ENCODE measurements at regions of chr20 and their contacts with region 1.

Region 1: DNA sequence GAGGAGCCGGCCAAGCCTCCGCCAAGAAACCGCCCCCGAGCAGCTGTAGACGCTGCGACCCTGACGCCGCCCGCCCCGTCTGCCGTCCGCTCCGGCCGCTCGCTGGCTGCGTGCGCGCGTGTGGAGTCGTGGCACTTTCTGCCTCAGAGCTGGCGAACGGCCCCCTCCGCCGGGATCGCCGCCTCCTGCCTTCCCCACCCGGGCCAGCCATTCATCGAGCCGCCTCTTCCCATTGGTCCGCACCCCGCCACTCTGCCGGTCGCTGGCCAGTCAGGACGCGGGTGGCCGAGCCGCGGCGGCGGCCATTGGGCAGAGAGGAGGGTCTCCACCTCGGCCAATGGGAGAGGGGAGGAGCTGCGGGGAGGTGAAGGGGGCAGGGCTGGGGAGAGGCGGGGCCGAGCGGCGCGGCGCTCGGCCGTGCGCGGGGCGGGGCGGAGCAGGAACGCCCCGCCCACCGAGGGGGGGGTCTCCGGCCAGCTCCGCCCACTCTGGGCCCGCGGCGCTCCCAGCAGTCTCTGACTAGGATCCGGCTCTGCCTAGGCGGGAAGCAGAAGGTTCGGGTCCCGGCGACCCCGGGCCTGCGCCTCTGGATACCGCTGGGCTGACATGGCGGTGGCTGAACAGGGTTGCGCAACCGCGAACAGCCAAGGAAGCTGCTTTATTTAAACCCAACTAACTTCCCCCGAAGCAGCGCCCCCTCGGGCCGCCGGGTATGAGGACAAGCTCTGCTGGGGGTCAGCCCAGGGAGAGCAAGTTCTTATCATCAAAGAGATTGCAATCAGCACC is at the start of gene RRBP1:
- DNase-seq: peak; percentile 99
- H3K4me3 ChIP-seq: peak within 1 kb of the TSS; percentile 80 to 88 (median 86)
- H3K27ac ChIP-seq: peak within 1 kb of the TSS; percentile 93 to 98 (median 96)
- H3K4me1 ChIP-seq: peaks cover 0 to 31% (median 20%) of the 10 kb centered on the region in 4 donors
- H3K27me3 ChIP-seq: no peaks in the 10 kb centered on the region
- CTCF ChIP-seq: peak; percentile 25 to 76 (median 61)
- EP300 ChIP-seq: no peak
- POLR2A ChIP-seq: peak; percentile 82 to 88
- total RNA-seq, gene RRBP1: 30.1 to 69.2 (median 38.8) TPM

Region 2: DNA sequence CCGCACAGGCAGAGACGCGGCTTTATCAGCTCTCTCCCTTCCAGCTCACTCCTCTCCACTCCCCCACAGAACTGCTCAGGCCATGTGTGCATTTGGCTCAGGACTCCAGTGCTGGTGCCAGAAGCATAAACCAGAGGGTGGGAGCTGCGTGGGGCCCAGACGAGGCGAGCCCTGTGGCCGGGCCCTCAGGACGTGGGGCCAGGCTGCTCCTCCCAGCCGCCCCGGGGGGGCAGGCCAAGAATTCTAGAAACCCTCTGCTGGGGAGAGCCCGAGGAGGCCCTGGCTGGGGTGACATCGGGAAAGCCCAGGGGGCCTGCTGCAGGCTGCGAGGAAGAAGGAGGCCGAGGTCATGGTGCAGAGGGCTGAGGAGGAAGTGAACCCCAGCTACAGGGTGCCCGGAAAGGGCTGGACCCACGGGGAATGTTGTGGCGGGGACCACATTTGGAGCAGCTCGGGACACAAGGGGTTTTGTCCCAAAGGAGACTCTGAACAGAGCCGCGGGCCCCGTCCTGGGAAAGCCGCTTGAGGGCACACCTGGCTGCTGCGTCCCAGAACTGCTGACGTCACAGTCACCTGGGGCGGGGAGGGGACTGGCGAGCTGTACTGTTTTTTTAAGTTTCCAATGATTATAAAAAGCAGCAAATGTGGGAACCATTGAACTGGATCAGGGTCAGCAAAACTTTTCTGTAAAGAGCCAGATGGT is 124.6 kb after region 1 on chr20:
- intact Hi-C with region 1: loop called (anchors 5 kb)
- DNase-seq: peak; percentile 91
- H3K4me3 ChIP-seq: peak overlapping the region in 1 of 4 donors; percentile 1
- H3K27ac ChIP-seq: peak overlapping the region; percentile 71 to 76 (median 74)
- H3K4me1 ChIP-seq: peaks cover 0 to 49% (median 38%) of the 10 kb centered on the region in 4 donors
- H3K27me3 ChIP-seq: no peaks in the 10 kb centered on the region
- CTCF ChIP-seq: no peak
- EP300 ChIP-seq: no peak
- POLR2A ChIP-seq: no peak

Region 3: DNA sequence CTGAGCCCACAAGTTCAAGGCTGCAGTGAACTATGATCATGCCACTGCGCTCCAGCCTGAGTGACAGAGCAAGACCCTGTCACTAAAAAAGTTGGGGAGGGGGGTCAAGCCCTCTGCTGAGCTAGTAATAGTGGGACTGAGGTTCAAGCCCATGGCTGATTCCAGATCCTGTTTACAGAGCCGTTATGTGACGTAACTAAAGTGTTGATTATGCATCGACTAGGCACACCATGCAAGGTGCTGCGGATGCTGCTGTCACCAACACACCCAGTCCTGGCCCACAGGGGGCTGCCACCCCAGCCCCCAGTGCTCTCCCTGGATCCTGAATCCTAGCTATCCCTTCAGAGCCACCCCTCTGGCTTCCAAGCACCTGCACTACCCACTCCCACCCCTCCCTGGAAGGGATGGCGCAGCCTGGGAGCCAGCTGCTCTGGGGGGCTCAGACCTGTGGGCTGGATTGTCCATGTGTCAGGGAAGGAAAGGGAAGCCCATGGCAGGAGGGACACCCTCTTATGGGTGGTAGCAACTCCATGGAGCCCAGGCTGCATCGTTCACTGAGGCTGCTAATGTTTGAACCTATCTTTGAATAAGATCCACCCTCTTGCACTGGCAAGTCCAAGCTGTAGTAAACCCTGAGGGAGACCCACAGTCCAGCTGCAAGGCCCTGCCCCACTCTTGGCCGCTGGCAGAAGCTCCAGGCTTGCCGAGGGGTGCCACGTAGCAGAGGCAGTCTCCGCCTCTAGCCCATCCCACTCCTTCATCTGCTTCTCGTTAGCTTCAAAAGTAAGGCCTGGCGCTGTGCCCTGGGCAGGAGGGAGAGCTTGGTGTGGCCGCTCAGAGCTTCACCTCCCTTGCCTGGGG is 191.3 kb after region 1 on chr20:
- intact Hi-C with region 1: loop called (anchors 1 kb)
- DNase-seq: peak; percentile 97
- H3K4me3 ChIP-seq: no peak overlapping the region
- H3K27ac ChIP-seq: peak overlapping the region; percentile 69 to 82 (median 82)
- H3K4me1 ChIP-seq: peaks cover 3 to 45% (median 34%) of the 10 kb centered on the region in 4 donors
- H3K27me3 ChIP-seq: no peaks in the 10 kb centered on the region
- CTCF ChIP-seq: no peak
- EP300 ChIP-seq: no peak
- POLR2A ChIP-seq: peak in 1 of 2 donors; percentile 34

Region 4: GRCh38 chr20:17898548-17898994 is 216.3 kb after region 1 on chr20:
- intact Hi-C with region 1: loop called (anchors 1 kb)
- DNase-seq: peak; percentile 90
- H3K4me3 ChIP-seq: no peak overlapping the region
- H3K27ac ChIP-seq: no peak overlapping the region
- H3K4me1 ChIP-seq: peaks cover 0 to 25% (median 16%) of the 10 kb centered on the region in 4 donors
- H3K27me3 ChIP-seq: no peaks in the 10 kb centered on the region
- CTCF ChIP-seq: peak; percentile 77 to 97 (median 95)
- EP300 ChIP-seq: no peak
- POLR2A ChIP-seq: no peak

Region 5: DNA sequence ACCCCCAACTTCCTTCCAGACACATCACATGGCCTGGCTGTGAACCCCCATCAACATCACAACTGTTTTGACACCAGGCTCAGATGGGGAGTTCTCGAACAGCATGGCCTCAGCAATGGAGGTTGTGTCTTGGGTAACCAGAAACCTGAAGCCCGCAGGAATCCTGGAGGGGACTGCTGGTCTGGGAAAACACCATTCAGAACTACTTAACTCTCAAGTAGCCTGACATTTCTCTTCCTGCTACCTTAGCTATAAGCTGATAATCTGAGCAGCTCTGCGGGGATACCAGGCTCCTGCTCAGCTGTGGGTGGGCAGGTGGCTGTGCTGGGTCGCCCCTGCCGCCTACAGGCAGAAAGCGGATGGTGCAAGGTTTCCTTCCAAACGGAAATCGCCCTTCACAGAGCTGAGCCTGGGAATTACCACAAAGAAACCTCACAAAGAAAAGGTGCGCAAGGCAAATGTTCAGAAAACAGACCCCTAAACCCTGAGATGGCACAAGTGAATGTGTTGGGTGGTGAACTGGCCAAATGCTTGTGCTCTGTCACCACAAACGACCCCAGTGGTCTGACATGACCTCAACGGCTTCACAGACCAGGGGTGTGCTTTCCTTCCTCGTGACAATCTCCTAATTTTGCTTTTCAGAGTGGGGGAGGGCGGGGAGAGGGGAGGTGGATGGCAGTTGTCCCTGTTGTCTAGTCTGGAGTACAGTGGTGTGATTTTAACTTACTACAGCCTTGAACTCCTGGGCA is 256.7 kb after region 1 on chr20:
- intact Hi-C with region 1: loop called (anchors 2 kb)
- DNase-seq: peak; percentile 82
- H3K4me3 ChIP-seq: no peak overlapping the region
- H3K27ac ChIP-seq: peak overlapping the region in 3 of 4 donors; percentile 70 to 81 (median 75)
- H3K4me1 ChIP-seq: peaks cover 0 to 43% (median 39%) of the 10 kb centered on the region in 4 donors
- H3K27me3 ChIP-seq: no peaks in the 10 kb centered on the region
- CTCF ChIP-seq: peak; percentile 62 to 91 (median 77)
- EP300 ChIP-seq: no peak
- POLR2A ChIP-seq: no peak

Region 6: GRCh38 chr20:17968366-17969279 is 286.3 kb after region 1 on chr20 and contains the starts of genes MGME1 and SNX5:
- intact Hi-C with region 1: loop called (anchors 1 kb)
- DNase-seq: peak; percentile 100
- H3K4me3 ChIP-seq: peak within 1 kb of the TSS; percentile 55 to 95 (median 83)
- H3K27ac ChIP-seq: peak within 1 kb of the TSS; percentile 94 to 97 (median 96)
- H3K4me1 ChIP-seq: peaks cover 0 to 79% (median 64%) of the 10 kb centered on the region in 4 donors
- H3K27me3 ChIP-seq: no peaks in the 10 kb centered on the region
- CTCF ChIP-seq: no peak
- EP300 ChIP-seq: peak in 2 of 4 donors; percentile 17 to 48
- POLR2A ChIP-seq: peak; percentile 26 to 33
- total RNA-seq, gene MGME1: 5.0 to 15.8 (median 10.8) TPM
- total RNA-seq, gene SNX5: 69.0 to 79.5 (median 72.5) TPM

Region 7: GRCh38 chr20:18005231-18006109 is 323.2 kb after region 1 on chr20:
- intact Hi-C with region 1: loop called (anchors 10 kb)
- DNase-seq: no peak
- H3K4me3 ChIP-seq: no peak overlapping the region
- H3K27ac ChIP-seq: peak overlapping the region in 1 of 4 donors; percentile 80
- H3K4me1 ChIP-seq: peaks cover 0 to 35% (median 22%) of the 10 kb centered on the region in 4 donors
- H3K27me3 ChIP-seq: no peaks in the 10 kb centered on the region
- CTCF ChIP-seq: no peak
- EP300 ChIP-seq: peak in 1 of 4 donors; percentile 28
- POLR2A ChIP-seq: no peak